AG04449 (cell line): ENCODE measurements at regions of chr6 and their contacts with region 1.

Region 1: GRCh38 chr6:22747571-22747970 is 178.2 kb downstream of the HDGFL1 start:
- DNase-seq: no peak
- H3K4me3 ChIP-seq: no peak overlapping the region
- CTCF ChIP-seq: no peak

Region 2: DNA sequence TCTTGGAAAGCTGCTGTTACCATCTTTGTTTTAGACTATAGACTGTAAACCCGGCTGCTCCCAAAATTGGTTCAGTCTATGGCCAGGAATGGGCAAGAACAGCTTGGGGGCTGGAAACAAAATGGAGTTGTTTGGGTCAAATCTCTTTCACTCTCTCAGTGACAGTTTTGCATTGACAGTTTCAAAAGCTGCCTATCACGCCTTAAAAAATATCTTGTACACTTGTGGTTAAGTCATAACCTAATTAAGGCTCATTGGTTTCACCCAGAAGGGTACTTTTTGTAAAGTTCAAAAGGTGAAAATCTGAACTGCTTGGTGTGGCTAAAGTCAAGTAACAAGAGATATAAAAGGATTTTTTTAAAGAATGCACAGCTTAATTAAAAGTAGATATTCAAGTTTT is 374.6 kb before region 1 on chr6:
- CTCF ChIA-PET with region 1: no interaction called
- POLR2A ChIA-PET with region 1: no interaction called
- DNase-seq: no peak
- H3K4me3 ChIP-seq: no peak overlapping the region
- CTCF ChIP-seq: no peak

Region 3: DNA sequence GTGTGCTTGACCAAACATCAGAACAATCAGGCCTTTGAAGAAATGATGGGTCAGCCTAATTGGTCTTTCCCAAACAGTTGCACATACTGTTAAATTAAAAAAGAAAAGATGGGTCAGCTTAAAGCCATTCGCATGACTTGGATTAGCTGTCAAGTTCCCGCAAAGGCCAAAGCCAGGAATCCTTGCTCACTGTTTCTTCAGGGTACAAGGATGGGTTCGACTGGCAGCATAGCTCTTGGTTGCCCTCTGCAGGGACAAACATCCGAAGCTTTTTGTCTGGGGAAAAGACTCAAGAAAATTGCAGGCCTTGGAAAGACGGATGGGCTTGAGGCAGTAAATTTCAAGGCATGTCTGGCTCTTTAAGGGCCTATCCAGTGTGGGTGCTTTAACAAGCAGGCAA is 10.2 kb before region 1 on chr6:
- CTCF ChIA-PET with region 1: interaction called, 19 read pairs
- POLR2A ChIA-PET with region 1: no interaction called
- DNase-seq: peak; percentile 38
- H3K4me3 ChIP-seq: no peak overlapping the region
- CTCF ChIP-seq: peak; percentile 61